Activated CD4-positive, alpha-beta memory T cell treated with anti-CD3 and anti-CD28 coated beads, Interleukin-2, amount 10 ng/mL, durations not matched to agents 7 days and 5 days (primary cell): ENCODE measurements at regions of chr12 and their contacts with region 1.

Region 1: GRCh38 chr12:47837190-47838171 is 17.8 kb upstream of the HDAC7 start:
- DNase-seq: peak; percentile 70
- H3K4me3 Mint-ChIP-seq: no peak overlapping the region
- H3K27ac Mint-ChIP-seq: no peak overlapping the region
- H3K4me1 Mint-ChIP-seq: peaks cover 61% of the 10 kb centered on the region
- H3K27me3 Mint-ChIP-seq: no peaks in the 10 kb centered on the region

Region 2: GRCh38 chr12:47758834-47759690 is 78.4 kb before region 1 on chr12 and contains the start of gene RAPGEF3:
- CTCF ChIA-PET with region 1: interaction called, 13 read pairs
- POLR2A ChIA-PET with region 1: interaction called, 6 read pairs
- DNase-seq: peak; percentile 79
- H3K4me3 Mint-ChIP-seq: peak within 1 kb of the TSS; percentile 70
- H3K27ac Mint-ChIP-seq: no peak within 1 kb of the TSS
- H3K4me1 Mint-ChIP-seq: peaks cover 50% of the 10 kb centered on the region
- H3K27me3 Mint-ChIP-seq: peaks cover 2% of the 10 kb centered on the region
- total RNA-seq, gene RAPGEF3: 1.4 to 1.6 TPM

Region 3: GRCh38 chr12:47779301-47779942 is 58.1 kb before region 1 on chr12:
- CTCF ChIA-PET with region 1: interaction called, 284 read pairs
- POLR2A ChIA-PET with region 1: interaction called, 55 read pairs
- DNase-seq: peak; percentile 92
- H3K4me3 Mint-ChIP-seq: peak overlapping the region; percentile 24
- H3K27ac Mint-ChIP-seq: peak overlapping the region; percentile 65
- H3K4me1 Mint-ChIP-seq: peaks cover 49% of the 10 kb centered on the region
- H3K27me3 Mint-ChIP-seq: no peaks in the 10 kb centered on the region

Region 4: DNA sequence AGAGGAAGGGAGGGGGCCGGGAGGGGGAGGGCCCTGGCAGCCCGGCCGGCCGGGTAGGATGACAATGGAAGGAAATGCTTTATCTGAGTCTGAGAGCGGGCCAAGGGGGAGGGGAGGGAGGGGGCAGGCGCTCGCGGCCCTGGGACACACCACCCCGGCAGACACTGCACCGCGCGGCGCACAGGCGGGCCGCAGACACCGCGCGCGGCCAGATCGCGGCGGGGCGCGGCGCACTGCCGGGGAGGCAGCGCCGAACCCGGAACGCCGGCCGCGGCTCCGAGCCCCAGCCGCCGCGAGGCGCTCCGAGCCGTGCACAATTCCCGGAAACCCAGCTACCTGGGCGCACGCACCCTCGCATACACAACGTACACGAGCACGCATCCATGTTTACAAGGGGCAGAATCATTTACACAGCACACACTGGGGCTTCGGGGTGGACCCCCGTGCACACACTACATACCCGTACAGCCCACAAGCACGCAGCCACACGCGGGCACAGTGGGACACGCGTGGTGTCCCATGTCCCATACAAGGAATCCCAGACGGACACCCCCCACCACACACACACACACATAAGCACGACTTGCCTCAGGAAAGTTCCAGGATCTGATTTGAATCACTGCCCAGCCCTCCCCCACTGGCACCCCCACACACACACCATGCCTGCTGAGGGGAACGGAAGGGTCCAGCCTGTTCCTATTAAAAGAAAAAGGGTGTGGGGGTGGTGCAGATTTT is 17.4 kb before region 1 on chr12 and contains the start of gene HDAC7:
- CTCF ChIA-PET with region 1: interaction called, 578 read pairs
- POLR2A ChIA-PET with region 1: interaction called, 1,018 read pairs
- DNase-seq: peak; percentile 81
- H3K4me3 Mint-ChIP-seq: peak within 1 kb of the TSS; percentile 89
- H3K27ac Mint-ChIP-seq: peak within 1 kb of the TSS; percentile 93
- H3K4me1 Mint-ChIP-seq: peaks cover 66% of the 10 kb centered on the region
- H3K27me3 Mint-ChIP-seq: no peaks in the 10 kb centered on the region
- total RNA-seq, gene HDAC7: 315 to 328 TPM

Region 5: GRCh38 chr12:47920913-47921312 is 83.4 kb after region 1 on chr12:
- CTCF ChIA-PET with region 1: no interaction called
- POLR2A ChIA-PET with region 1: no interaction called
- DNase-seq: no peak
- H3K4me3 Mint-ChIP-seq: no peak overlapping the region
- H3K27ac Mint-ChIP-seq: no peak overlapping the region
- H3K4me1 Mint-ChIP-seq: peaks cover 1% of the 10 kb centered on the region
- H3K27me3 Mint-ChIP-seq: peaks cover 39% of the 10 kb centered on the region

Region 6: GRCh38 chr12:47963340-47964040 is 126.0 kb after region 1 on chr12 and contains the start of gene TMEM106C:
- CTCF ChIA-PET with region 1: interaction called, 12 read pairs
- POLR2A ChIA-PET with region 1: no interaction called
- DNase-seq: peak; percentile 92
- H3K4me3 Mint-ChIP-seq: peak within 1 kb of the TSS; percentile 99
- H3K27ac Mint-ChIP-seq: peak within 1 kb of the TSS; percentile 79
- H3K4me1 Mint-ChIP-seq: peaks cover 44% of the 10 kb centered on the region
- H3K27me3 Mint-ChIP-seq: peaks cover 35% of the 10 kb centered on the region
- total RNA-seq, gene TMEM106C: 139 to 141 TPM

Region 7: GRCh38 chr12:48216785-48217184 is 379.3 kb after region 1 on chr12:
- CTCF ChIA-PET with region 1: no interaction called
- POLR2A ChIA-PET with region 1: no interaction called
- DNase-seq: no peak
- H3K4me3 Mint-ChIP-seq: no peak overlapping the region
- H3K27ac Mint-ChIP-seq: no peak overlapping the region
- H3K4me1 Mint-ChIP-seq: no peaks in the 10 kb centered on the region
- H3K27me3 Mint-ChIP-seq: peaks cover 18% of the 10 kb centered on the region